HEK293 (cell line): ENCODE measurements at regions of chr19 and their contacts with region 1.

Region 1: DNA sequence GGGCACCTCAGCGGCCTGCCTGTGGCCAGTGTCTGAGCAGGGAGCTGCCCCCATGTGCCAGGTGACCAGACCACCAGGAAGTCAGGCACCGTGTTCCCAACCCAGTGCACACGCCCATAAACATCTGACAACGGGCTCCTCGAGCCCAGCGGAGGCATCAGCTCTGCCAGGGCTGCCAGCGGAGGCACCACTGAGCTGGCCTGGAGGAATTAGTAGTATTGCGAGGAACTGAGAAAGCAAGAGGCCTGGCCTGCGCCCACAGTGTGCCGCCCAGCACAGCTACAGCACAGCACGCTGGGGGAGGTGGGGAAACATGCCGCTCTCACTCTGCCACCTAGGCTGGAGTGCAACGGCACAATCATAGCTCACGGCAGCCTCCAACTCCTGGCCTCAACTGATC is 44.6 kb downstream of the ANKRD27 start:
- H3K4me3 ChIP-seq: no peak overlapping the region
- H3K27ac ChIP-seq: no peak overlapping the region
- H3K4me1 ChIP-seq: no peaks in the 10 kb centered on the region
- CTCF ChIP-seq: no peak

Region 2: DNA sequence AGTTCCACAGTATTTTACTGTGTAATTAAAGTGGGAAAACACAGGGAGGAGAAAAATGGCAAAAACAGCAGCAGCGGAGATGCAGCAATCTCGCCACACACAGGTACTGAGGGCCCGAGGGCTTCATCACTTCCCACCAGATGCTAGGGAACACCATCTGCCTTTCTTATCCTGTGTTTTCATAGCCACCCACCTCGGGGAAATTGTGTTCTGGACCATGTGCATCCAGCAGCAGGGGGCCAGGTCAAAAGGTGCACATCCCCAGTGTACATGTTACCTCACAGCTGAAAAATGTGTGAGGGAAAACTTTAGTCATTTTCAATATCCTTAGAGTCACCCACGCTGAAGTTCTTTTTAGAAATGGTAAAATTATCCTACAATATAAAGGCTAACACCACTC is 19.2 kb before region 1 on chr19:
- CTCF ChIA-PET with region 1: no interaction called
- POLR2A ChIA-PET with region 1: no interaction called
- H3K4me3 ChIP-seq: no peak overlapping the region
- H3K27ac ChIP-seq: no peak overlapping the region
- H3K4me1 ChIP-seq: no peaks in the 10 kb centered on the region
- CTCF ChIP-seq: no peak

Region 3: DNA sequence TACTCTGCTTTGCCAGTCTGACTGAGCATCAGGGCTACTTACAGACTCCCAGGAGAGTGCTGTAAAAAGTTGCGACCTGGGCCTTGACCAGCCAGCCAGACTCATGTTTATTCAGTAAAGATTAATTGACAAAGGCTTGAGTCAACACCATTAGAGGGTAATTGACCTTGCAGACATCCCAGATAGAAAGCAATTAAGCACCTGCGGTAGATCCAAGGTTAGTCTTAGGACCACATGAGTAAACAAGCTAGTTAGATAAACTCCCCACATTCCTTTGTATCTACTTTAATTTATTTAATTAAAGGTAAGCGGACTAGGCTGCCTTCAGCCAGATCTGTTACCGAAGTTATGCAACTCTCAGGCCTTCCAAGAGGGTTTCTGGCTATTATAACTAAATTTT is 71.7 kb after region 1 on chr19:
- CTCF ChIA-PET with region 1: no interaction called
- POLR2A ChIA-PET with region 1: interaction called, 12 read pairs
- H3K4me3 ChIP-seq: no peak overlapping the region
- H3K27ac ChIP-seq: peak overlapping the region; percentile 54
- H3K4me1 ChIP-seq: peaks cover 19% of the 10 kb centered on the region
- CTCF ChIP-seq: no peak

Region 4: GRCh38 chr19:32719611-32720059 is 89.3 kb after region 1 on chr19 and contains the start of gene TDRD12:
- CTCF ChIA-PET with region 1: no interaction called
- POLR2A ChIA-PET with region 1: no interaction called
- H3K4me3 ChIP-seq: no peak within 1 kb of the TSS
- H3K27ac ChIP-seq: no peak within 1 kb of the TSS
- H3K4me1 ChIP-seq: no peaks in the 10 kb centered on the region
- CTCF ChIP-seq: no peak